ENCODE measurements at regions of chr18 and their contacts with region 1.

Region 1: DNA sequence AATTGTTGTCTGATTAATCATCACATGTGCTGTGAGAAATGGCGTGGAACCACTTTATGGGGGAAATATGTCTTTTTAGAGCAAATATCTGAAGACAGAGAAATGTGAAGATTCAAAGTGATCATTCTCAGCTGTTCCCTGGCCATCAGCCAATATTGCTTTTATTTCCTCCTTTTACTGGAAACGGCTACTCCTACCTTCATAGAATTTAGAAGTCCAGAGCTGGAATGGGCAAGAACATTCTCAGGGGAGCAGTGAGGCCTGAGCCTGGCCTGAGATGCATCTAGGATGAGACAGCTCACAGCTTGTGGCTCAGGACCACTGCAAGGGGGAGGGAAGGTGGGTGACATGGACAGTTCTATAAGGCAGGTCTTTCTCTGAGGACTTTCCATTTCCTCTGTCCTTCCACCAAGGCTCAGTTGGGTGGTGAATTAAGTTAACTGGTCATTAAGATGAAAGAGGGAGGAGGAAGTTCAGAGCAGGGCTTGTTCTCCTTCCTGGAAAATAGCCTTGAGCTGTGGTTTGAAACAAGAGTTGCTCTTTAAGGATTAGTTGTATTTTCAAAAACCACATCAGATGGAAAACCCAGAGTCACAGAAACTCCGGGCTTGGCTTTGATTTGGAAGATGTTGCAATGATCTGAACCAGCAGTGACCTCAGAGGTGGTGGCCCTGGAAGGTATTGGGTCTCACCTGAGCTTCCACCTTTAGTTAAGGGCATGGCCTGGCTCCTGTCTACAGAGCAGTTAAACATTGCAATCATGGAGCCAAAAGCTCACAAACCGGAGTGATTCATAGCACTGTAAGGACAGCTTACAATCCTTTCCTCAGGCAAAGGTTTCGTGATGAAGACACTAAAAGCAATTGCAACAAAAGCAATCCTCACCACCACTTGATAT is 144.3 kb downstream of the VAPA start:
- DNase-seq: no peak
- ATAC-seq: peak; percentile 38

Region 2: GRCh38 chr18:10035306-10035991 is 22.7 kb before region 1 on chr18:
- intact Hi-C with region 1: no loop called
- DNase-seq: no peak
- ATAC-seq: no peak

Region 3: GRCh38 chr18:10140461-10141282 is 82.5 kb after region 1 on chr18:
- intact Hi-C with region 1: loop called (anchors 10 kb)
- DNase-seq: no peak
- ATAC-seq: no peak

Region 4: GRCh38 chr18:10169064-10169562 is 111.0 kb after region 1 on chr18:
- intact Hi-C with region 1: no loop called
- DNase-seq: no peak
- ATAC-seq: no peak

Measured in Right ventricle myocardium inferior (tissue), 1 donor.